ENCODE measurements at regions of chr9 and their contacts with region 1.

Region 1: GRCh38 chr9:93566408-93567270 is 9.7 kb upstream of the PHF2 start:
- DNase-seq: peak; percentile 100
- ATAC-seq: peak; percentile 98
- H3K4me3 Mint-ChIP-seq: peak overlapping the region; percentile 86
- H3K27ac Mint-ChIP-seq: peak overlapping the region; percentile 92
- H3K4me1 Mint-ChIP-seq: peaks cover 33% of the 10 kb centered on the region
- H3K27me3 Mint-ChIP-seq: no peaks in the 10 kb centered on the region
- CTCF ChIP-seq: peak; percentile 37

Region 2: GRCh38 chr9:93095205-93096130 is 471.2 kb before region 1 on chr9:
- CTCF ChIA-PET with region 1: no interaction called
- POLR2A ChIA-PET with region 1: no interaction called
- intact Hi-C with region 1: loop called (anchors 1 kb)
- DNase-seq: peak; percentile 100
- ATAC-seq: peak; percentile 79
- H3K4me3 Mint-ChIP-seq: peak overlapping the region; percentile 86
- H3K27ac Mint-ChIP-seq: peak overlapping the region; percentile 99
- H3K4me1 Mint-ChIP-seq: peaks cover 83% of the 10 kb centered on the region
- H3K27me3 Mint-ChIP-seq: no peaks in the 10 kb centered on the region
- CTCF ChIP-seq: no peak

Region 3: DNA sequence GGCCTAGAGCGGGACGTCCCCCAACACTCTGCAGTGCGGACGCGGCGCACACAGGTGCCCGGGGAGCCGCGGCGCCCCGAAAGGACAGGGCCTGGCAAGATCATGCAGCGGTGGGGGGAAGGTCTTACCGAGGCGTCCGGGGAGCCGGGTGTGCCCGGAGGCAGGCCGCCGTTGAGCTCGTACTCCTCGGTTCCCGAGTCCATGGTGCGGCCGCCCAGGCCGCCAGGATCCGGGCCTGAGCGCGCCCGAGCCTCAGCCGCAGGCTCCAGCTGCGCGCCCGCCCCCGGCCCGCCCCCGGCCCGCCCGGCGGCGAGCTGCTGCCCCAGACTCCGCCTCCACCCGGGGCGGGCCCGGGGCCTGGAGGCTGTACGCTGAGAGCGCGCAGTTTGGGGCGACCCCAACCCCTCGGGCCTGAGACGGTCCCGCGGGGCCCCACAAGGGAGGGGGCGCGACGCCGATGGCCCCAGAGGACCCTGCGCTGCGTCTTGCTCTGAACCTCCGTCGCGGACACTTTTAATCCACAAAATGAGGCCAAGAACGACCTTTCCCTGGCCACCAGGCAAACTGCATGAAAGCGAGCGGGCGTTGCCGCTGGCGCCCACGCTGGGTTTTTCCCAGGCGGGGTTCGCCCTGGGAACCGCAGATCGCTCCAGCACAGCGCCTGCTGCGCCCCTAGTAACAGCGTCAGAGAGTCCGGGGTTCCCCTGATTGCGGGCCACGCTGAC is 432.5 kb before region 1 on chr9 and contains the start of gene NINJ1:
- CTCF ChIA-PET with region 1: no interaction called
- POLR2A ChIA-PET with region 1: interaction called, 6 read pairs
- intact Hi-C with region 1: loop called (anchors 10 kb)
- DNase-seq: peak; percentile 75
- ATAC-seq: peak; percentile 85
- H3K4me3 Mint-ChIP-seq: peak within 1 kb of the TSS; percentile 85
- H3K27ac Mint-ChIP-seq: peak within 1 kb of the TSS; percentile 80
- H3K4me1 Mint-ChIP-seq: peaks cover 48% of the 10 kb centered on the region
- H3K27me3 Mint-ChIP-seq: no peaks in the 10 kb centered on the region
- CTCF ChIP-seq: no peak
- total RNA-seq, gene NINJ1: 10.2 and 11.0 TPM in 2 replicates

Region 4: DNA sequence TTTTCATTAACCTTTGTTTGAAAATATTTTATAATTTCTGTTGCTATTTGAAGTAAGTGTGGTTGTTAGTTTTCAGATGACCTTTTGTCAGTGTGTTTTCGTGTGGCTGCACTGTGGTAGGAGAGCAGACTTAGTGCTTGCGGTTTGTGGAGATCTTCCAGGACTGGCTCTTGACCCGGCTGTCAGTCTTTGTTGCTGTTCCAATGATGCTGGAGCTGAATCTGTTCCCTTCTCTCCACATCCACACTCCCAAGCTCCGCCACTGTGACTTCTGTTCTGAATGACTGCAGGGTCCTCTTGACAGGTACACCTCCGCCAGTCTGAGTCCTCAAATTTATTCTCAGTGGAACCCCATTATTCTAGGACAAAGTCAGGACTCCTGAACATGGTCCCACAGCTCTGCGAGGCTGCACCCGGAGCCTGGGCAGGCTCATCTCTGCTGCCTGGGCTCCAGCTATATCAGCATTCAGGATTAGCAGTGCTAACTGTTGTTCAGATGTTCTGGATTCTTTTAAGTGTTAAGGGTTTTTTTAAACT is 256.7 kb before region 1 on chr9:
- CTCF ChIA-PET with region 1: no interaction called
- POLR2A ChIA-PET with region 1: no interaction called
- intact Hi-C with region 1: loop called (anchors 5 kb)
- DNase-seq: no peak
- ATAC-seq: no peak
- H3K4me3 Mint-ChIP-seq: no peak overlapping the region
- H3K27ac Mint-ChIP-seq: no peak overlapping the region
- H3K4me1 Mint-ChIP-seq: no peaks in the 10 kb centered on the region
- H3K27me3 Mint-ChIP-seq: peaks cover 14% of the 10 kb centered on the region
- CTCF ChIP-seq: no peak

Region 5: GRCh38 chr9:93324191-93324977 is 242.3 kb before region 1 on chr9:
- CTCF ChIA-PET with region 1: no interaction called
- POLR2A ChIA-PET with region 1: no interaction called
- intact Hi-C with region 1: no loop called
- DNase-seq: no peak
- ATAC-seq: no peak
- H3K4me3 Mint-ChIP-seq: no peak overlapping the region
- H3K27ac Mint-ChIP-seq: no peak overlapping the region
- H3K4me1 Mint-ChIP-seq: no peaks in the 10 kb centered on the region
- H3K27me3 Mint-ChIP-seq: peaks cover 13% of the 10 kb centered on the region
- CTCF ChIP-seq: no peak

Region 6: GRCh38 chr9:93505541-93506132 is 61.0 kb before region 1 on chr9:
- CTCF ChIA-PET with region 1: no interaction called
- POLR2A ChIA-PET with region 1: interaction called, 4 read pairs
- intact Hi-C with region 1: loop called (anchors 2 kb)
- DNase-seq: no peak
- ATAC-seq: no peak
- H3K4me3 Mint-ChIP-seq: peak overlapping the region; percentile 9
- H3K27ac Mint-ChIP-seq: peak overlapping the region; percentile 71
- H3K4me1 Mint-ChIP-seq: peaks cover 67% of the 10 kb centered on the region
- H3K27me3 Mint-ChIP-seq: no peaks in the 10 kb centered on the region
- CTCF ChIP-seq: no peak

Region 7: GRCh38 chr9:95317119-95317892 is 1750.7 kb after region 1 on chr9 and contains the start of gene FANCC:
- CTCF ChIA-PET with region 1: no interaction called
- POLR2A ChIA-PET with region 1: no interaction called
- intact Hi-C with region 1: loop called (anchors 2 kb)
- DNase-seq: peak; percentile 89
- ATAC-seq: peak; percentile 84
- H3K4me3 Mint-ChIP-seq: peak within 1 kb of the TSS; percentile 92
- H3K27ac Mint-ChIP-seq: peak within 1 kb of the TSS; percentile 91
- H3K4me1 Mint-ChIP-seq: peaks cover 15% of the 10 kb centered on the region
- H3K27me3 Mint-ChIP-seq: peaks cover 10% of the 10 kb centered on the region
- CTCF ChIP-seq: no peak
- total RNA-seq, gene FANCC: 10.4 and 11.4 TPM in 2 replicates

Measured in activated B cell treated with CpG ODN at 0.5 μM for 24 hours (primary cell).